ENCODE measurements at regions of chr6 and their contacts with region 1.

Region 1: DNA sequence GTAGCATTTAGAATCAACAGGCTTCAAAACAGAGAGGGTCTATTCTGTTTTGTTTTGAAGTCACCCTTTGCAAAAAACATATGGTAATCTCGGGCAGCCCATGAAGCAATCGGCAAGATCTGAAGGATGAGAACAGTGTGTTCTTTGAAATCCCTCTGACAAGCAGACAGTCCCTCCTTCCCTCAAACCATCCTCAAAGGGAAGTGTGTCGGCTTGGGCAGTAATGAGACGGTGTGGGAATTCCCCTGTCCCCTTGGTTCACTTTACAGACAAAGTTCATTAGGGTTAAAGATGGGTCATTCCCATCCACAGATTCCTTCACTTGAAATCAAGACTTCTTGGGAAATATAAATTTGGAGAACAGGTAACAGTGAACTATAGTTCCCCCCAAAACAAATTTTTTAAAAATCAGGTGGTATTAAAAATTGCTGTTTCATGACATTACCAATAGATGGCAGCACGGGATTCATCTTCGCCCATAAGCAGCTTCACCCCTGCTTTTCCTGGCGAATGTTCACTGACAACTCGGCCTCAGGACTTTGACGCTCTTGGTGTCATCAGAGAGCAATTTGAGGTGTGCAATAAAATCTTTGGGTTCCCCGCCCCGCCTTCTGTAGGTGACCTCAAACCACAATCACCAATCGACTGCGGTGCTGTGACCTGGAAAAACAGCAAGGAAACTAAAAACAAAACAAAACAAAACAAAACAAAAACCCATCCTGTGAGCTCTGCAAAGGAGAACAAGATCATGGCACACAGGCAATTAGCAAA is 159.3 kb upstream of the TNFAIP3 start:
- DNase-seq: no peak
- H3K4me3 ChIP-seq: no peak overlapping the region
- CTCF ChIP-seq: peak; percentile 52

Region 2: GRCh38 chr6:137543114-137543513 is 164.7 kb before region 1 on chr6:
- CTCF ChIA-PET with region 1: no interaction called
- POLR2A ChIA-PET with region 1: no interaction called
- DNase-seq: no peak
- H3K4me3 ChIP-seq: no peak overlapping the region
- CTCF ChIP-seq: no peak

Region 3: DNA sequence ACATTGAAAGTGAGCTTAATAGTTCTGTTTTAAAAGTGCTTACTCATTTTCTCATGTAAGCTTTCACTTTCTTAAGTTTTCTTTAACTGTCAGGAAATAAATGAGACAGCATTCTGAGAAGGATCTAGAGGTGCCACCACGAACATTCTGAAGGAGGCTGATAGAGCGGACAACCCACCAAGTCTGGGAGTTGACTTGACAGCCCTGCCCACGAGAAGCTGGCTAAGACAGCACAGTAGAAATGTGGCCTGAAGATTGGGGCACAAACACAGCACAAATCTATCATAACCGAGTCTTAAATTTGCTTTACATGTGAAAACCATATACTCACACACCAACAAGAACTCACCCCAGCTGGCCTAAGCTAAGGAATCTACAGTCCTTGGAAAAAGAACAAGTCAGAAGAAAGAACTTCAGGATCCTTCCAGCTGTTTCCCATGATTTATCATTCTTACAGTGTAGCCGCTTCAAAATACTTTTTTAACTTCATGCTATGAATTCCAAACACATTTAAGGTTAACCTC is 15.0 kb after region 1 on chr6:
- CTCF ChIA-PET with region 1: interaction called, 12 read pairs
- POLR2A ChIA-PET with region 1: no interaction called
- DNase-seq: no peak
- H3K4me3 ChIP-seq: no peak overlapping the region
- CTCF ChIP-seq: no peak

Region 4: DNA sequence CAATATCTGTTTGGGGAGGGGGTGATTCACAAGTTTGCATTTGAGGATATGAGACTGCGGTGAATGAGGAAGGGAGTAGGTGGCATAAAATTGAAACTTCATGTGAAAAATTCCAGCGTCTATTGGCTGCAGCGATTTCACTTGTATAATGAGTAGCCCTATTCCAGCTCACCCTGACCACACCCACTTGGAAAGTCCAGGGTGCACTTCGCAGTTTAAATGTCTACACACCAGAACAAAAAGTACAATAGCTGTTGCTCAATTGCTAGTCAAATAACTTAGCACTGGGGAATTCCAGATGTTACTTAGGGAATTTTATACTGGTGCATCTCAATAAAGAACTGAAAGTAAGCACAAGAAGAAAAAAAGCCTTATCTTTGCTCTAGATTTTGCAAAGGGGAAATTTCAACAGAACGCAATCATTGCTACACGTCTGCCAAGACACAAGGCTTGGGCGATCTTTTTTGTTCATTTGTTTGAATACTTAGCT is 165.5 kb after region 1 on chr6:
- CTCF ChIA-PET with region 1: interaction called, 82 read pairs
- POLR2A ChIA-PET with region 1: no interaction called
- DNase-seq: no peak
- H3K4me3 ChIP-seq: no peak overlapping the region
- CTCF ChIP-seq: no peak

Region 5: GRCh38 chr6:137927777-137928218 is 220.0 kb after region 1 on chr6:
- CTCF ChIA-PET with region 1: interaction called, 13 read pairs
- POLR2A ChIA-PET with region 1: no interaction called
- DNase-seq: no peak
- H3K4me3 ChIP-seq: no peak overlapping the region
- CTCF ChIP-seq: no peak

Region 6: DNA sequence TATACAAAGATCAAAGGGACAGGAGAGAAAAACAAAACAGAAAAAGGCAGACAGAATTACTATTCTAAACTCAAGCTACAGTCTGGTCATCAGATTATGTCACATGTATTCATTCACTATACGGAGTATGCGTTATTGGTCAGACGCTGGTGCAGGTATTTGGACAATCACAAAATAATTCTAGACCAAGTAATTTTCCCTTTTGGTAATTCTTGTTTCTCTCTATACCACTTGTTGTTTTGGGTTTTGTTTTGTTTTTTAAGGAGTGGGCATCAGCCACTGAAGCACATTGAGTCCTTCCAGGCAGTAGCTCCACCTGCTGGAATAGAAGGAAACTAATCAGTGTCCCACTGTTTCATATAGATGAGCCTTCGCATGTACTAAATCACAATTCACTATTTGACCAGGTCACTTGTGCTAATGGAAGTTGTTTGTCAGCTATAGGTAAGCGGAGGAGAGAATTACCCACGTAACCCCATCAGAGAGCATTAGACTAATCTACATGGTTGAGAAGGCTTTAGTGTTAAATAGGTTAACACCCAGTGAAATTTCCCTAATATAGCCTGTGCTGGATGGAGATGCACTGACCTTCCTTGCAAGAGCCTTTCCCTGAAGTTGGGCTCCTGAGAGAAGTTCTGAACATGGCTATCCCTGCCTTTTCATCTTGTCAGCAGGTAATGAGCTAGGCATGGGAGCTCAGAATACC is 237.2 kb after region 1 on chr6:
- CTCF ChIA-PET with region 1: interaction called, 248 read pairs
- POLR2A ChIA-PET with region 1: no interaction called
- DNase-seq: no peak
- H3K4me3 ChIP-seq: no peak overlapping the region
- CTCF ChIP-seq: peak; percentile 68

Region 7: DNA sequence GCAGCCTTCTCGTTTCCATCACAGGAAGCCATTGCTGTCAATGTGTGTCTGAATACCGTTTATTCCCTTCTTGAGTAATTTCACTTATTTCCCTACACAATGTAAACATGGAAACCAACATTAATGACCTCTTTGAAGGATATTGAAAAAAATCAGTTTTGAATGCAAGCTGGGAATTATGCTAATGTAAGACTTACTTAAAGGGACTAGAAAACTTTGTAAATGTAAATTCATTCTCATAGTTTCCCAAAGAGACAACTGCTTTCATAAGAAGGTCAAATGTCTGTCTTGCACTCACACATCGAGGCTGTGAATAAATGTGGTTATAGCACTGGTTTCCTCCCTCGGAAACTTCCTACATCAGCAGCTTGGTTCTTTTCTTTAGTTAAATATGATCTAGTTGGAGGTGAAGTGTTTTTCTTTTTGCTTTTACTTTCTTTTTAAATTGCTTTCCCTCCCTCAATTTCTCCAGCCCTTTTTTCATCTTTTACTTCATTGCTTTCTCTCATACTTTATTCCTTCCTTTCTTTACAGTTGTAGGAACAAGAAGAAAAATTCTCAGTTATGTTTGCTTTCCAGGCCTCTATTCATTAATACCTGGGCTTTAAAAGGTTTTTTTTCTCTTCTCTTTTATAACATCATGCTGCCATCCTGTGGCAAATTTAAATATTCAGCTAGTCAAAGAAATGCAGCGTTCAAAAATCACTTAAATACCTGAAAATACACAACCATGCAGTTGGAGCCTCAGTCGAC is 267.6 kb after region 1 on chr6:
- CTCF ChIA-PET with region 1: interaction called, 34 read pairs
- POLR2A ChIA-PET with region 1: no interaction called
- DNase-seq: no peak
- H3K4me3 ChIP-seq: no peak overlapping the region
- CTCF ChIP-seq: no peak

Measured in AG04449 (cell line).